ENCODE measurements at regions of chr4 and their contacts with region 1.

Region 1: GRCh38 chr4:108030332-108030731 is 40.6 kb downstream of the HADH start:
- DNase-seq: peak; percentile 92
- H3K4me3 Mint-ChIP-seq: peak overlapping the region; percentile 52
- H3K27ac Mint-ChIP-seq: peak overlapping the region; percentile 97
- H3K4me1 Mint-ChIP-seq: peaks cover 70% of the 10 kb centered on the region
- H3K27me3 Mint-ChIP-seq: no peaks in the 10 kb centered on the region

Region 2: DNA sequence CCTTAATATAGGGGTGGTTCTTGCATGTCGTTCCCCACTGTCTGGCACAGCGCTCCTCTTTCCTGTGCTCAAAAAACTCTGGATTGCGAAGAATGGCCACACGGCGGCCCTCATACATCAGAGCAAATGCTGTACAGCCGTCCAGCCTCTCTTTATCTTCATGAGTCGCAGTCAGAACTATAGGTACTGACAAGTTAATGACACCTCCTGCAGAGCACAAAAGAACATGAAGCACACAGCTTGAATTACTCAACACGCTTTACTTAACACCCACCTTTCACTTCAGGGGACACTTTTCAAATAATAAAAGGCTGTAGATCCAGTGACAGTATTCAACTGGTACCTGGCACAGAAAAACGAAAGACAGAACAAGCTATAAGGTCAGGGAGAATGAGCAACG is 375.6 kb before region 1 on chr4:
- CTCF ChIA-PET with region 1: no interaction called
- intact Hi-C with region 1: no loop called
- DNase-seq: no peak
- H3K4me3 Mint-ChIP-seq: no peak overlapping the region
- H3K27ac Mint-ChIP-seq: no peak overlapping the region
- H3K4me1 Mint-ChIP-seq: no peaks in the 10 kb centered on the region
- H3K27me3 Mint-ChIP-seq: no peaks in the 10 kb centered on the region

Region 3: GRCh38 chr4:108018040-108018883 is 12.1 kb before region 1 on chr4:
- CTCF ChIA-PET with region 1: interaction called, 53 read pairs
- intact Hi-C with region 1: no loop called
- DNase-seq: peak; percentile 95
- H3K4me3 Mint-ChIP-seq: no peak overlapping the region
- H3K27ac Mint-ChIP-seq: no peak overlapping the region
- H3K4me1 Mint-ChIP-seq: peaks cover 13% of the 10 kb centered on the region
- H3K27me3 Mint-ChIP-seq: no peaks in the 10 kb centered on the region

Region 4: GRCh38 chr4:108094923-108095482 is 64.7 kb after region 1 on chr4:
- CTCF ChIA-PET with region 1: interaction called, 11 read pairs
- intact Hi-C with region 1: loop called (anchors 1 kb)
- DNase-seq: no peak
- H3K4me3 Mint-ChIP-seq: peak overlapping the region; percentile 11
- H3K27ac Mint-ChIP-seq: peak overlapping the region; percentile 96
- H3K4me1 Mint-ChIP-seq: peaks cover 86% of the 10 kb centered on the region
- H3K27me3 Mint-ChIP-seq: no peaks in the 10 kb centered on the region

Region 5: GRCh38 chr4:108141213-108141950 is 111.0 kb after region 1 on chr4:
- CTCF ChIA-PET with region 1: interaction called, 4 read pairs
- intact Hi-C with region 1: loop called (anchors 2 kb)
- DNase-seq: peak; percentile 72
- H3K4me3 Mint-ChIP-seq: peak overlapping the region; percentile 77
- H3K27ac Mint-ChIP-seq: peak overlapping the region; percentile 99
- H3K4me1 Mint-ChIP-seq: peaks cover 89% of the 10 kb centered on the region
- H3K27me3 Mint-ChIP-seq: no peaks in the 10 kb centered on the region

Region 6: GRCh38 chr4:108172753-108173598 is 142.6 kb after region 1 on chr4:
- CTCF ChIA-PET with region 1: interaction called, 6 read pairs
- intact Hi-C with region 1: loop called (anchors 1 kb)
- DNase-seq: peak; percentile 79
- H3K4me3 Mint-ChIP-seq: peak overlapping the region; percentile 91
- H3K27ac Mint-ChIP-seq: peak overlapping the region; percentile 92
- H3K4me1 Mint-ChIP-seq: peaks cover 50% of the 10 kb centered on the region
- H3K27me3 Mint-ChIP-seq: no peaks in the 10 kb centered on the region

Region 7: GRCh38 chr4:108483079-108483478 is 452.7 kb after region 1 on chr4:
- CTCF ChIA-PET with region 1: interaction called, 3 read pairs
- intact Hi-C with region 1: loop called (anchors 2 kb)
- DNase-seq: peak; percentile 60
- H3K4me3 Mint-ChIP-seq: peak overlapping the region; percentile 33
- H3K27ac Mint-ChIP-seq: peak overlapping the region; percentile 16
- H3K4me1 Mint-ChIP-seq: peaks cover 33% of the 10 kb centered on the region
- H3K27me3 Mint-ChIP-seq: no peaks in the 10 kb centered on the region

Region 8: DNA sequence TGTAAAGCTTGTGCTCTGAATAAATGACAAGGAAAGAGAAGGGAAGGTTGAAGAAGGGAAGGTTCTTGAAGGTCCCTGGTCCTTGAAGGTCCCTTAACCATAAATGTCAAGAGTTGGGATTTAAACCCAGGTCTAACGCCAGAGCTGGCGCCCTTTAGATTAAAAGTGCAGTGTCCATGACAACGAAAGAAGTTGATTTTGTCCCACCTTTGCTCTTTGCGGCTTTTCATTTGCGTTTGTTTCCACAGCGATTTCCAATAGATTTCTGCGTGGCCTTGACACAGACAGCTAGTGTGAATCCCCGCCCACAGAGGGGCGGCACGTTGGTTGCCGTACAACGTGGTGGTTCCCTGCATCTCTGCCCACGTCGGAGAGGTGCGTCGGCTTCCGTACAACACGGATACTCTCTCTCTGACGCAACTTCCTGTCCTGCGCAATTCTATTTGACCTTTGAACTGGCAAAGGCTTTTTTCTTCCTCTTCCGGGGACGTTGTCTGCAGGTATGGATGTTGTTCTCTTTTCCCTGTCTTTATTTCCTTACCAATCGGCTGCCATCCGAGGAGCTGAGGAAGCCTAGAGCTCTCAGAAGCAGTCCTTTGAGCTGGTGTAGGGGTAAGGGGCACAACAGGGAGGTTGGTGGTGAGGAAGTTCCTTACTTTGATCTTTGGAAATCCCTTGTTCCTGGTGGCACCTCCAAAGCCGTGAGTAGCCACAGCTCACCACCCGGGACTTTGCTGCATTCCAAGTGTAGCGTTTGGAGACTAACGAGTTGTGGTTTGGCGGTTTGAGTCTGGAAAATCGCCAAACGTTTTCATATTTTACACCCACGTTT is 590.0 kb after region 1 on chr4 and contains the start of gene RPL34:
- CTCF ChIA-PET with region 1: no interaction called
- intact Hi-C with region 1: loop called (anchors 1 kb)
- DNase-seq: peak; percentile 99
- H3K4me3 Mint-ChIP-seq: peak within 1 kb of the TSS; percentile 93
- H3K27ac Mint-ChIP-seq: peak within 1 kb of the TSS; percentile 95
- H3K4me1 Mint-ChIP-seq: peaks cover 45% of the 10 kb centered on the region
- H3K27me3 Mint-ChIP-seq: no peaks in the 10 kb centered on the region
- total RNA-seq, gene RPL34: 1,983 to 2,004 TPM

Region 9: DNA sequence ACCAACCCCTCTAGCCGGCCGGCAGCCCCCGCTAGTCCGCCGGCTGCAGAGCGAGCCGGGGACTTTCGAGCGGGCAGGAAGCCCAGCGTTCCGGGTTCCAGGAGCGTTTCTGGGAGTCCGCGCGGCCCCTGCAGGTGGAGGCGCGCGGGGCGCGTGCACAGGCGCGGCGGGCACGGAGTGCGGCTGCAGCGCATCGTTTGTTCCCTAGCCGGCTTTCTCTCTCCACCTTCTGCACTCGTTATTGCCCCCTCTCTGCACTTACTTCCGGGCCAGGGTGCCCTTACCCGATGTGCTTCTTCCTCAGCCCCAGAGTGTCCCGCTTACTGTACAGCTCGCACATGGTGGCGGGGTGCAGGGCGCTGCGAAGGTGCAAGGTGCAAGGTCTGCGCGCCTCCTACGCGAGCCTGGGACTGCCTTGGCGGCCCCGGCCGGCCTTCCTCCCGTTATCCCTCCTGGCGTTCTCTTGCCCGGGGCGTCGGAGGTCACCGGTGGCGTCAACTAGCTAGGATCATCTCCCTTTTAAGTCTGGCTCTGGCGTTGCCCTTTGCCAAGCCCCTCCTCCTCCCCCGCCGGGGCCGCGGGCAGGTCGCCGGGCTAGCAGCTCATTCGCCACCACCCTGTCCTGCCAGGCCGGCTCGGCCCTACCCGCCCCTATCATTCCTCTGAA is 732.4 kb after region 1 on chr4 and contains the start of gene ETNPPL:
- CTCF ChIA-PET with region 1: no interaction called
- intact Hi-C with region 1: no loop called
- DNase-seq: peak; percentile 45
- H3K4me3 Mint-ChIP-seq: peak within 1 kb of the TSS; percentile 80
- H3K27ac Mint-ChIP-seq: peak within 1 kb of the TSS; percentile 64
- H3K4me1 Mint-ChIP-seq: peaks cover 8% of the 10 kb centered on the region
- H3K27me3 Mint-ChIP-seq: peaks cover 24% of the 10 kb centered on the region
- total RNA-seq, gene ETNPPL: not detected

Measured in activated naive CD4-positive, alpha-beta T cell treated with anti-CD3 and anti-CD28 coated beads for 36 hours (primary cell).